Common myeloid progenitor, CD34-positive (primary cell): ENCODE measurements at regions of chr3 and their contacts with region 1.

Region 1: DNA sequence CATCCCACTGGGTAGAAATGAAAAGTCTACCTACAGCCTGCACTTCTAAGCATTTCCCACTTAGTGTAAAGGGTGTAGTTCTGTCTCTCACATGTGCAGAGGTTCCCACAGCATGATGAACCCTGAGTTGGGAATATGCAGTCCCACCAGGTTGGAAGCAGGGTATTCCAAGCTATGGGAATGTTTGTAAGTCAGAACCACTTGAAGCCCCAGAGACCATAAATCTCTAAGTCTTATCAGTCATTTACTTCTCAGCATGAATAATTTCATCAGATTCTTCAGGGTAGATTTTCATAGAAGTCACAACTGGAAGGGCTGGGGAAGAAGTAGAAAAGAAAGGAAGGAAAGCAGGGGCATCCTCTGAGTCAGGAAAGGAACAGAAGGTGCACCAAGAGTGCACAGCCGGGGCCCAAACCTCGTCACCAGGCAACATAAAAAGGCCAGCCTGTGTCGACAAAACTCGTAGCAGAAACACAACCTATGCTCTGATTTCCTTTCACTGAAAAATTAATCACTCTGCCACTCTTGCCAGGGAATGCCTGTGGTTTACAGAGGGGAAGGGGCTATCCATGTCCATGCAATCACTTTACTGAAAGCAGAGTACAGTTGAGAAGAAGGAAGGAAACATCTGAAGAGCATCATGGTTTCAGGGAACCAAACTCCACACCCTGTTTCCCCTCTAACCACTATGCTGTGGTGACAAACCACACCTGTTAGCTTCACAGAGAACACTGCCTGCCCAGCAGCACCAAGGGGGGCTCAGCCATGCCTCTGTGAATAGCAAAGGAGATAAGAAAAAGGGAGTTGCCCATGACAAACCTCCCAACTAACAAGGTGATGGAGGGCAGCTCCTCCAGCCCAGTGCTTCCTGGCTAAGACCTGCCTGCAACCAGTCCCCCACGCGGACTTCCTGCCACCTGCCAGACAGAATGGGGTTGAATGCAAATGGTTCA is 40.5 kb downstream of the SH3BP5 start:
- DNase-seq: peak; percentile 88 to 99 (median 99)
- H3K4me3 ChIP-seq: peak overlapping the region in 2 of 7 experiments; percentile 33 to 52
- H3K27ac ChIP-seq: no peak overlapping the region
- H3K4me1 ChIP-seq: peaks cover 29 to 78% (median 56%) of the 10 kb centered on the region in 4 experiments
- H3K27me3 ChIP-seq: peaks cover 0 to 14% (median 3%) of the 10 kb centered on the region in 5 experiments

Region 2: GRCh38 chr3:15108082-15108545 is 183.8 kb before region 1 on chr3:
- CTCF ChIA-PET with region 1: no interaction called
- POLR2A ChIA-PET with region 1: no interaction called
- DNase-seq: peak; percentile 80 to 87 (median 85)
- H3K4me3 ChIP-seq: peak overlapping the region in 4 of 7 experiments; percentile 25 to 57 (median 30)
- H3K27ac ChIP-seq: no peak overlapping the region
- H3K4me1 ChIP-seq: peaks cover 0 to 5% (median 4%) of the 10 kb centered on the region in 4 experiments
- H3K27me3 ChIP-seq: no peaks in the 10 kb centered on the region

Region 3: GRCh38 chr3:15276028-15276724 is 15.7 kb before region 1 on chr3:
- CTCF ChIA-PET with region 1: interaction called, 11 read pairs
- POLR2A ChIA-PET with region 1: interaction called, 5 read pairs
- DNase-seq: peak in 2 of 3 donors; percentile 53 to 63
- H3K4me3 ChIP-seq: no peak overlapping the region
- H3K27ac ChIP-seq: no peak overlapping the region
- H3K4me1 ChIP-seq: peaks cover 10 to 63% (median 27%) of the 10 kb centered on the region in 4 experiments
- H3K27me3 ChIP-seq: peaks cover 0 to 43% (median 0%) of the 10 kb centered on the region in 5 experiments

Region 4: GRCh38 chr3:15307580-15307979 is 15.7 kb after region 1 on chr3:
- CTCF ChIA-PET with region 1: interaction called, 11 read pairs
- POLR2A ChIA-PET with region 1: no interaction called
- DNase-seq: no peak
- H3K4me3 ChIP-seq: no peak overlapping the region
- H3K27ac ChIP-seq: no peak overlapping the region
- H3K4me1 ChIP-seq: peaks cover 0 to 45% (median 8%) of the 10 kb centered on the region in 4 experiments
- H3K27me3 ChIP-seq: no peaks in the 10 kb centered on the region